PC-9 (cell line): ENCODE measurements at regions of chr12 and their contacts with region 1.

Region 1: DNA sequence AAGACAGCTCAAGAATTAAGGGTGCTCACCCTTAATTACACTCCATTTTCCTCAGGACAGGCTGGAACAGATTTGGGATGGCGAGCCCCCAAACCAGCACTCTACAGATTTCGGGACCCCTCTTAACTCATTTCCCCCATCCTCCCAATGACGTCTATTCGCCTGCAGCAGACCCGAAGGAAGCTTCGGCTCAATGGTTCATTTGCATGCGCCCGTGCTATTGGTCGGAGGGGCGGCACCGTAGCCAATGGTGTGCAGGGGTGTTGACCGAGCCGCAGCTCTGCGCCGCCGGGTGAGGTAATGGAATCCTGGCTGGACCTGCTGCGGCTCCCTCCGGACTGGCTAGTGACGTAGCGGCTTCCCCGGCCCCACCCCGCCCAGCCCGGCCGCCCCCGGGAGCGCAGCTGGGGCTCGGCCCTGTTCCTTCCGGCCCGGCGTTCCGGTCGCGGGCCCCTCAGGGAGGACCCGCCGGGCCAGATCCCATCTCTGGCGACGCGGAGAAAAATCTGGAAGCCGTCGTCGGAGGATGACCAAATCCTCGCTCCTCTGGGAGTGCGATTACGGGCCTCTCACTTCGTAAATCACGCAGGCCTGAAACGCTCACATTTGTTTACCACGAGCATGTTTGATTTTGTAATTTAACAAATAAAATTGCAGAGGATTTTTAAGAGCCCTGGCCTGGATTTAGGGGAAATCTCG is 18.3 kb upstream of the NR4A1 start:
- DNase-seq: peak; percentile 89 to 93
- H3K4me3 ChIP-seq: peak overlapping the region; percentile 53; the same call in 1 of the 2 replicates
- H3K27ac ChIP-seq: no peak overlapping the region
- H3K4me1 ChIP-seq: peaks cover 25% of the 10 kb centered on the region
- H3K27me3 ChIP-seq: no peaks in the 10 kb centered on the region; the same call in 1 of the 2 replicates
- CTCF ChIP-seq: no peak

Region 2: GRCh38 chr12:52050761-52051541 is 18.0 kb after region 1 on chr12 and contains the start of gene NR4A1:
- CTCF ChIA-PET with region 1: interaction called, 3 read pairs
- POLR2A ChIA-PET with region 1: interaction called, 38 read pairs
- intact Hi-C with region 1: loop called (anchors 2 kb)
- DNase-seq: peak; percentile 66 to 94
- H3K4me3 ChIP-seq: peak within 1 kb of the TSS; percentile 64
- H3K27ac ChIP-seq: no peak within 1 kb of the TSS
- H3K4me1 ChIP-seq: peaks cover 20% of the 10 kb centered on the region
- H3K27me3 ChIP-seq: no peaks in the 10 kb centered on the region
- CTCF ChIP-seq: no peak
- total RNA-seq, gene NR4A1: 6.5 and 13.4 TPM in 2 replicates

Region 3: GRCh38 chr12:52069327-52070184 is 36.6 kb after region 1 on chr12 and contains the start of gene ATG101:
- CTCF ChIA-PET with region 1: interaction called, 17 read pairs
- POLR2A ChIA-PET with region 1: interaction called, 11 read pairs
- intact Hi-C with region 1: no loop called
- DNase-seq: peak; percentile 87
- H3K4me3 ChIP-seq: peak within 1 kb of the TSS; percentile 89
- H3K27ac ChIP-seq: peak within 1 kb of the TSS; percentile 80
- H3K4me1 ChIP-seq: peaks cover 20% of the 10 kb centered on the region
- H3K27me3 ChIP-seq: peaks cover 6% of the 10 kb centered on the region; the same call in 1 of the 2 replicates
- CTCF ChIP-seq: no peak
- total RNA-seq, gene ATG101: 44.6 and 59.0 TPM in 2 replicates